GM10248 (cell line): ENCODE measurements at regions of chr1 and their contacts with region 1.

Region 1: DNA sequence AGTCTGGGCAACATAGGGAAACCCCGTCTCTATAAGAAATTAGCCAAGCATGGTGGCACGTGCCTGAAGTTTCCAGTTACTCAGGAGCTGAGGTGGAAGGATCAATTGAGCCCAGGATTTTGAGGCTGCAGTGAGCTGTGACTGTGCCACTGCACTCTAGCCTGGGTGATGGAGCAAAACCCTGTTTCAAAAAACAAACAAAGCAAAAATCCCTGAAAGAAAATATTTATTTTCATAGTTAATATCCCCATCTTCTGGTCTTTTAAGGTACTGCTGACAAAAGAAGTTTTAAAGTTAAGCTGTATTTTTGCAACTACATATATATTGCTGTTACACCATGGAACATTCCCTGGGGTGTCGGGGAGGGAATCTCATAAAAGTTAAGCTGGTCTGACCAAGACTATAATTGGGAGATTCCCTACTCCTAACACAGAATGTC is 26.0 kb downstream of the VAMP4 start:
- DNase-seq: no peak
- CTCF ChIP-seq: peak; percentile 41

Region 2: DNA sequence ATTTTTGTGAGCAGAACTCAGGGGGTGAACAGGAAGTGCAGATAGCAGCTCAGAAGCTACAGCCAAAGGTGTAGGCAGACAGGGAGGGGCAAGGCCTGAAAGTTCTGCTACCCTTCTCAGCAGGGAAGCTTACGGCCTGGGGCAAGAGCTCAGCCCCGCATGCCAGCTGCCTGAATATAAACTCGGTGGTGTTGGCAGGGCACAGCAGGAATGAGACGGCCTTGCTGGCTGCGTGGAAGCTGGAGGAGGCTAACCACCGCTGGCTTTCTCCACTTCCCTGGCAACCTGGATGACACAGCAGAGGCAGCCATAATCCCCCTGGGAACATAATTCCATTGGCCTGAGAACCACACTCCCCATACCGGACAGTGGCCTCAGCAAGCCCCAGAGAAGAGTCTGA is 312.5 kb before region 1 on chr1:
- CTCF ChIA-PET with region 1: no interaction called
- POLR2A ChIA-PET with region 1: no interaction called
- DNase-seq: no peak
- CTCF ChIP-seq: no peak

Region 3: DNA sequence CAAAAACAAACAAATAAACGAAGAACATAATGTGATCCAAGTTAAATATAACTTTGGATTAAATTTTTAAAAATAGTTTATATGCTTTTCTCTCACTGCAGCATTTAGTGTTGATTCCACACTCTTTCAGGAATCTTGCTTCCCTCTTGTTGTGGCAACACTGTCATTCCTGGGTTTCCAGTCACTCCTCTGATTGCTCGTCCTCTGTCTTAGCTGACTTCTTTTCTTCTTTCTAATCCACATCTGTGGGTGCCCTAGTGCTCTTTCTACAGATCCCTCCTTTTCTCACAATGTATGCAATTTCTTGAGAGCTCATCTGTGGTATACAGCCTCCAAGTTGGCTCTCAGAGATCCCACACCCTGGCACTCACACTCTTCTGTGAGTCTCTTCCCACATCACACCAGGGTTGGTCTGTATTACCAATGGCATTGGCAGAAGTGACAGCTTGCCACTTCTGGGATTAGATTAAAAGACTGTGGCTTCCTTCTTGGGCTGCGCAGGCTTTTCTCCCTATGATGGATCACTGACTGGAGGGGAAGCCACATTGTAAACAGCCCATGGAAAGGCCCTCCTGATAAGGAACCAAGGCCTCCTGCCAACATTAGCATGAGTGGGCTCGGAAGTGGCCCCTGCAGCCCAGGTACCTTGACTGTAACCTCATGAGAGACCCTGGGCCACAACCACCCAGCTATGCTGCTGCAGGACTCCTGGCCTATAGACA is 51.8 kb before region 1 on chr1:
- CTCF ChIA-PET with region 1: no interaction called
- POLR2A ChIA-PET with region 1: no interaction called
- DNase-seq: no peak
- CTCF ChIP-seq: no peak

Region 4: DNA sequence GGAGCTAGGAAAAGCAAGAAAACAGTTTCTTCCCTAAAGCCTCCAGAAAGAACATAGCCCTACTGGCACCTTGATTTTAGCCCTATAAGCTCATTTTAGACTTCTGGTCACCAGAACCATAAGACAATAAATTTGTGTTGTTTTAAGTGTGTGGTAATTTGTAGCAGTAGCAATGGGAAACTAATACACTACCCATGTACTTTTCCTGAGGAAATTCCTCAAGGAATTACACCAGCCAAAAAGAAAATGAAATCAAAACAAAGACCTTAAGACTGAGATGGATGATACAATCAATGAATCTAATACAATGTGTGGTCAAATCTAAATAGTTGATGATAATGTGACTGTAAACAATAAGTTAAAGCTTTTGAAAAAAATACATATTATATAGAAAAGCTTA is 14.2 kb after region 1 on chr1:
- CTCF ChIA-PET with region 1: interaction called, 15 read pairs
- POLR2A ChIA-PET with region 1: no interaction called
- DNase-seq: no peak
- CTCF ChIP-seq: no peak

Region 5: DNA sequence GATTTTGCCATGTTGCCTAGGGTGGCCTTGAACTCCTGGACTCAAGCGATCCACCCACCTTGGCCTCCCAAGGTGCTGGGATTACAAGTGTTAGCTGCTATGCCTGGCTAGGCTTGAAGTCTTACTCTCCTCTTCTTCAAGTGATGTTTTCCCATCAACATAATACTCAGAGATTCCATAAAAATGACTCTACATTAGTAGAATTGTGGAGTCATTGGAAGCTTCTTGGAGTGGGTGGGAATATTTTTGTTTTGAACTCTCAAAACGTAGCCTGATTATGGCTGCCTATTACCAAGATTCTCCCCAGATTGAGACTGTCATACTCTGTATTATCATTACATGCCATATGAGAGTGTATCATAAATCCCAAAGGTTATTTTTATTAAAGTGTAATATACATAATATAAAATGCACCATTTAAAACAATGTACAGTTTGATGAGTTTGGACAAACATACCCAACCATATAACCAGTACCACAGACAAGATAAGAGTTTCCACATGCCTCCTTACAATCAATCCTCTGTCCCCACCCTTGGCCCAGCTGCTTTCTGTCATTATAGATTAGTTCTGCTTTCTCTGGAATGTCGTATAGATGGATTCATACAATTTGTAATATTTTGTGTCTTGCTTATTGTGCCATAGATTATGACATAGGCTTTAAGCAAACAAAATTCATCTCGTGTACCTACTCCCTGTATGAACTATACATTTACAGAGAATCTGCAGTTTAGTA is 117.4 kb after region 1 on chr1:
- CTCF ChIA-PET with region 1: no interaction called
- POLR2A ChIA-PET with region 1: no interaction called
- DNase-seq: no peak
- CTCF ChIP-seq: no peak